ENCODE measurements at regions of chr6 and their contacts with region 1.

Region 1: DNA sequence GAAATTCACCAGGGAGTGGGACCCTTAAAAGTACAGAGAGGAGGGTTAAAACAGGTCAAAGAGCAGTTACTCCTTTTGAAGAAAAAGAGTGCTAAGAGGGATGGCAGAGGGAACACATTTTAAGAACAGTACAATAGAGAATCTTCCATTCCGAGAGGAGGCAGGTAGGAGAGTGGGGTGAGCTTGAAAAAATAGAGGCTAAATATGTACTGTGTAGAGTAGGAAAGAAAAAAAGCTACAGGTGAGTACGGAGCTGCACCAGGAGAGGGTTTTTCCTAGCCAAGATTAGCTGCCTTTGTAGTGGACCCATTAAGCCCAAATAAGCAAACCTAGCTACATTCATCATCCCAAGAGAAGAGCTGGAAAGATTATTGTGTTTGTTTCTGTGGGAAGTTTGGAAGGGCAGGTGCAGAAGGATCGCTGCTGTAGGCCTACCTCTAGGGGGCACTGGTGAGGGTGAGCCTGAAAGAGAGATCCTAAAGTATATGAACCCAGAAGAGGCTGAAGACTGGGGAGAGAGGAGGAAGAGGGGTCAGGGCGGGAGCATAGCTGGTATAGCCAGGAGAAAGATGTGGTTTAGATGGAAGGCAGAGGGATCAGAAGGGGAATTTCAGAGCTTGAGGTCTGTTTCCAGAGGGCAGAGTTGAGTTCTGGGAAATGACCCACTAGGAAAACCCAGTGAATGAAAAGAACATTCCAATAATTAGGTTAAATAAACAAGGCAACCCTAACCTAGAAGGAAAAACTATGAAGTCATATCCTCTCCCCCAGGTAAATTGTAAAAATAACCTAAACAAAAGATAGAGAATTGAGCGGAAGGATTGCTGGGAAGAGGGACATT is 50.2 kb upstream of the HINT3 start:
- DNase-seq: peak; percentile 76
- H3K4me3 ChIP-seq: no peak overlapping the region
- H3K27ac ChIP-seq: no peak overlapping the region
- H3K4me1 ChIP-seq: no peaks in the 10 kb centered on the region
- H3K27me3 ChIP-seq: no peaks in the 10 kb centered on the region
- CTCF ChIP-seq: peak; percentile 74

Region 2: DNA sequence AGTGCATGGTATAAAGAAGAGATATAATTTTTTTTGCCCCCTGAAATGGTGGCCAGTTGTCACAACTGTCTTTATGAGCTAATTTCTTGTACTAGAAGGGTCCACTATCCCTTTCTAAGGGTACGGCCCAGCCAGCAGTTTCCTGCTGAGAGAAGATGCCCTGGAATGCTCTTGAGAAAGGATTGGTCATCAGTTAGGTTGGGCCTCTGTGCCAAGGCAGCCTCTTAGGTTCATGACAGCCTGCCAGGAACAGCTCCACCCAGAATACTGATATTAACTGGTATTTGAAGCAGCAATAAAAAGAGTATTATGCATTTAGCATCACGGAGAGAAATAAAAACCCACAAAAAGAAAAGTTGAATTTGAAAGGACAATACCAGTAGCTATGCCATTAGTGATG is 41.2 kb after region 1 on chr6:
- intact Hi-C with region 1: loop called (anchors 5 kb)
- DNase-seq: no peak
- H3K4me3 ChIP-seq: no peak overlapping the region
- H3K27ac ChIP-seq: no peak overlapping the region
- H3K4me1 ChIP-seq: peaks cover 8% of the 10 kb centered on the region
- H3K27me3 ChIP-seq: no peaks in the 10 kb centered on the region
- CTCF ChIP-seq: no peak

Region 3: DNA sequence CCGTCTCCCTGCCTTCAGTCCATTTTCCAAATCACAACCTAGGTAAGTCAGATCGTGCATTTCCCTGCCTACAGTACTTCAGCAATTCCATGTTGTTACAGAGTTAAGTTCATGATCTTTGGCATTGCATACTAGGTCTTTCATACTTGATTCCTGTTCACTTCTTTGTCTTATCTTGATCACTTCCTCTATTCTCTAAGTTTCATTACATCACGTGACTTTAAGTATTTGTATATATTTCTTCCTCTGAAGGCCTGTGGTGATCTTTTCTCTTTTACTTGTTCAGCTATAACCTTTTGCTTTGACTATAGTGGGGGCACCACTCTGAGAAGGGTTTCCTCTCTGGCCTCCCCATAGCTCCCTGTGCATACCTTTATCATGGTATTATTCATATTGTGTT is 180.2 kb after region 1 on chr6:
- intact Hi-C with region 1: no loop called
- DNase-seq: no peak
- H3K4me3 ChIP-seq: no peak overlapping the region
- H3K27ac ChIP-seq: no peak overlapping the region
- H3K4me1 ChIP-seq: no peaks in the 10 kb centered on the region
- H3K27me3 ChIP-seq: no peaks in the 10 kb centered on the region
- CTCF ChIP-seq: no peak